Activated CD4-positive, alpha-beta T cell treated with anti-CD3 and anti-CD28 coated beads, Interleukin-2, amount 10 ng/mL, durations not matched to agents 24 days and 14 days (primary cell): ENCODE measurements at regions of chr9 and their contacts with region 1.

Region 1: GRCh38 chr9:125631391-125632085 is 75.5 kb downstream of the MAPKAP1 start:
- DNase-seq: peak; percentile 78
- H3K4me3 Mint-ChIP-seq: peak overlapping the region; percentile 51
- H3K27ac Mint-ChIP-seq: peak overlapping the region; percentile 45
- H3K4me1 Mint-ChIP-seq: peaks cover 52% of the 10 kb centered on the region
- H3K27me3 Mint-ChIP-seq: no peaks in the 10 kb centered on the region

Region 2: DNA sequence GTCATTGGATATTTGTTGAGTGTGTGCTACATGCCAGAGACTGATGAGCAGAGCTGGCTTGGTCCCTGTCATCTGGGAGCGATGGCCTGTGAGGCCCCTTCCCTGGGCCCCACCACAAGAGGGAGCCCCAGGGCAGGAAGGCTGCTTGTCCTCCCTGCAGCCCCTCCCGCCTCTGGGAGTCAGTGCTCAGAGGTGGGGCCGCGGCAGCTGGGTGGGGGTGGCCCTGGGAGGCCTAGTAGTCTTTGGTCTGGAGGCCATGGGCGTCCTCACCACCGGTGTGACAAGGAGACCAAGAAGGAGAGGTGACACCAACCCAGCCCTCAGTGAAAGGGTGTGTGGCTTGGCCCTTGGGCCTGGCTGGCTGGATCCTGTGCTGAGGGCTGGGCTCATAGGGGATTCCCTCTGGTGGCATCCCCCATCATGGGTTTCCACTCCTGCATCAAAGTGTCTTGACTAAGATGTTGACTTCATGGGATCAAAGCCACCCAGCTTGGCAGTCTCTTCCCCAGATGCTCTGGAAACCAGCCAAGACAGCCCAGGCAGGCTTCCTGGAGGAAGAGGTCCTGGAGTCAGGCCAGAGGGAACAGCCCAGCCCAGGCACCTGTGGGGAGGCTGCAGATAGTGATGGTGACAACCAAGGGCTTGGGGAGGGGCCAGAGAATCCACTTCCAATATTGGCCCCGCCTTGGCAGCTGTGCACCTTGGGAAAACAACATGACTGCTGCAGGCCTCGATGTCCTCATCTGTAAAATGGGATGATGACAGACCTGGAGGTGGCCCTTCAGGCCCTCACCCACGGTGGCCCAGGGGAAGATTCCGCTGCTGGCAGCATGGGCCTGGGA is 203.3 kb before region 1 on chr9:
- intact Hi-C with region 1: loop called (anchors 1 kb)
- DNase-seq: peak; percentile 76
- H3K4me3 Mint-ChIP-seq: no peak overlapping the region
- H3K27ac Mint-ChIP-seq: no peak overlapping the region
- H3K4me1 Mint-ChIP-seq: no peaks in the 10 kb centered on the region
- H3K27me3 Mint-ChIP-seq: no peaks in the 10 kb centered on the region

Region 3: GRCh38 chr9:125548141-125548540 is 83.4 kb before region 1 on chr9:
- intact Hi-C with region 1: no loop called
- DNase-seq: no peak
- H3K4me3 Mint-ChIP-seq: no peak overlapping the region
- H3K27ac Mint-ChIP-seq: no peak overlapping the region
- H3K4me1 Mint-ChIP-seq: no peaks in the 10 kb centered on the region
- H3K27me3 Mint-ChIP-seq: no peaks in the 10 kb centered on the region

Region 4: DNA sequence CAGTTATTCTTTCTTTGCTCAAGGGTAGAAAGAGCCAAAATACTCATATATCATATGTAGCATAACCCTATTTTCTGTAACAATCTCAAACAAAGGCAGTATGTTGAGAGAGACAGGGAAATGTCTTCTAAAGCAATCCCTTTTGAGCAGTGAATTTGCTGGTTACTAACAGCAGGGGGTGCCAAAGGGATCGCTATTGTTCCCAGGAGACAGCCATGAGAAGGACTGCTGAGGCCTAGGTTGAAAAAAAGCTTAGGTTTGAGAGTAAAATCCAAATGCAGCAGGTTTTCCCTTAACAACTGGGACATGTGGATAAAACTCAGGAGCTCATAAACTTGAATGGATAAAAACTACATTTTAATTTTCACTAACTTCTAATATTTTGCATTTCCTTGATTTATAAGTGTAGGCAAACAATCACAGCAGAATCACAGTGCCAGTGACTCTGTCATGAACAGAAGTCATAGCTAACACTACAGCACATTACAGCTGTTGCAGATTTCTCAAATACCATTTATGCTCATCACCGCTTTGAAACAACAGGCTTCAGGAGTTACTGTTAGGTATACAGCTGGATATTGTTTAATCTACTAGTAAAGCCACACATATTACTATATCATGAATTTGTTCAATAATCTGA is 73.0 kb before region 1 on chr9:
- intact Hi-C with region 1: loop called (anchors 1 kb)
- DNase-seq: peak; percentile 86
- H3K4me3 Mint-ChIP-seq: no peak overlapping the region
- H3K27ac Mint-ChIP-seq: no peak overlapping the region
- H3K4me1 Mint-ChIP-seq: peaks cover 19% of the 10 kb centered on the region
- H3K27me3 Mint-ChIP-seq: no peaks in the 10 kb centered on the region

Region 5: DNA sequence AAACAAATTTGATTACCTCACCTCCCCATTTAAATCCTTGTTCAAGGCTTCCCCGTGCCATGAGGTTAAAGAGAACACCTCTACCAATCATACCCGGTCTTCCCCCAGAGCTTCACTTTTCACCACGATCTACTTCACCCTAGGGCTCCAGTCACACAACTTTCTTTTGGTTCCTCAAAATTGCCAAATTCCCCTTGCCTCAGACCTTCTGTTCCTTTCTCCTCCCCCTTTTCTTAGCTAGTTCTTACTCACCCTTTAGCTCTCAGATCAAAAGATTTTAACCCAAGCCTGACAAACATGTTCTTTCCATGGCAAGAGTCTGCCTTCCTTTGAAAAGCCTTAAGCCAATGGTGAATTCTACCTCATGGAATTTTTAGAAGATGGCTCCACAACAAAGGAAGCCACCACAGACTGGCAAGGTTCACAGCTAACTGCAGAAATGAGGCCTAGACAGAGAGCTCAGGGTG is 18.8 kb after region 1 on chr9:
- intact Hi-C with region 1: loop called (anchors 1 kb)
- DNase-seq: peak; percentile 61
- H3K4me3 Mint-ChIP-seq: peak overlapping the region; percentile 48
- H3K27ac Mint-ChIP-seq: peak overlapping the region; percentile 86
- H3K4me1 Mint-ChIP-seq: peaks cover 49% of the 10 kb centered on the region
- H3K27me3 Mint-ChIP-seq: no peaks in the 10 kb centered on the region

Region 6: GRCh38 chr9:125700791-125701190 is 69.3 kb after region 1 on chr9:
- intact Hi-C with region 1: loop called (anchors 1 kb)
- DNase-seq: peak; percentile 61
- H3K4me3 Mint-ChIP-seq: peak overlapping the region; percentile 29
- H3K27ac Mint-ChIP-seq: peak overlapping the region; percentile 61
- H3K4me1 Mint-ChIP-seq: peaks cover 37% of the 10 kb centered on the region
- H3K27me3 Mint-ChIP-seq: no peaks in the 10 kb centered on the region

Region 7: GRCh38 chr9:125746017-125746773 is 114.7 kb after region 1 on chr9:
- intact Hi-C with region 1: loop called (anchors 1 kb)
- DNase-seq: peak; percentile 97
- H3K4me3 Mint-ChIP-seq: peak overlapping the region; percentile 95
- H3K27ac Mint-ChIP-seq: peak overlapping the region; percentile 95
- H3K4me1 Mint-ChIP-seq: peaks cover 27% of the 10 kb centered on the region
- H3K27me3 Mint-ChIP-seq: peaks cover 39% of the 10 kb centered on the region